ENCODE measurements at regions of chr2 and their contacts with region 1.

Region 1: GRCh38 chr2:82823892-82824291 is 1635.2 kb downstream of the SUCLG1 start:
- DNase-seq: no peak
- H3K4me3 ChIP-seq: no peak overlapping the region
- H3K27ac ChIP-seq: no peak overlapping the region
- H3K4me1 ChIP-seq: no peaks in the 10 kb centered on the region
- H3K27me3 ChIP-seq: no peaks in the 10 kb centered on the region
- CTCF ChIP-seq: no peak
- EP300 ChIP-seq: no peak
- POLR2A ChIP-seq: no peak

Region 2: DNA sequence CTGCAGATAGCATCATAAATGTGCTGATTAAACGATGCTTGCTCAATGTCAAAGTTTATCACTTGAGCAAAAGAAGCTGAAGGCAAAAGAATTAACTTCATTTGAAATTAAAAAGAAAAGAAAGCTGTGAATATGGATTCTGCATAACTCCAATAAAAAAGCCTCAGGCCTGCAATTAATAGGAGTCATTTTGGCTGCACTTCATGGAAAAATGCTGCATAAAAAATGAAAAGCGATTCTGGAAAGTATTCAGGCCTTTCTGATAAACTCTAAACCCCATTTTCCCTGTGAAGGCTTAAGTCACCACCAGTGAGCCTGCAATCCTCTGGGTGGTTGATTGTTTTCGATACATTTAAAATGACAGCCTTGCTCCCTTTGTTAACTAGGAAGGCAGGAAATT is 158.2 kb before region 1 on chr2:
- intact Hi-C with region 1: no loop called
- DNase-seq: no peak
- H3K4me3 ChIP-seq: no peak overlapping the region
- H3K27ac ChIP-seq: no peak overlapping the region
- H3K4me1 ChIP-seq: no peaks in the 10 kb centered on the region
- H3K27me3 ChIP-seq: no peaks in the 10 kb centered on the region
- CTCF ChIP-seq: no peak
- EP300 ChIP-seq: no peak
- POLR2A ChIP-seq: no peak

Region 3: GRCh38 chr2:82790206-82791021 is 33.5 kb before region 1 on chr2:
- intact Hi-C with region 1: loop called in 1 of 4 experiments (anchors 2 kb)
- DNase-seq: no peak
- H3K4me3 ChIP-seq: no peak overlapping the region
- H3K27ac ChIP-seq: no peak overlapping the region
- H3K4me1 ChIP-seq: no peaks in the 10 kb centered on the region
- H3K27me3 ChIP-seq: no peaks in the 10 kb centered on the region
- CTCF ChIP-seq: no peak
- EP300 ChIP-seq: no peak
- POLR2A ChIP-seq: no peak

Region 4: GRCh38 chr2:83081826-83082690 is 258.2 kb after region 1 on chr2:
- intact Hi-C with region 1: no loop called
- DNase-seq: no peak
- H3K4me3 ChIP-seq: no peak overlapping the region
- H3K27ac ChIP-seq: no peak overlapping the region
- H3K4me1 ChIP-seq: no peaks in the 10 kb centered on the region
- H3K27me3 ChIP-seq: no peaks in the 10 kb centered on the region
- CTCF ChIP-seq: no peak
- EP300 ChIP-seq: no peak
- POLR2A ChIP-seq: no peak